CD4-positive, alpha-beta T cell (primary cell): ENCODE measurements at regions of chr3 and their contacts with region 1.

Region 1: DNA sequence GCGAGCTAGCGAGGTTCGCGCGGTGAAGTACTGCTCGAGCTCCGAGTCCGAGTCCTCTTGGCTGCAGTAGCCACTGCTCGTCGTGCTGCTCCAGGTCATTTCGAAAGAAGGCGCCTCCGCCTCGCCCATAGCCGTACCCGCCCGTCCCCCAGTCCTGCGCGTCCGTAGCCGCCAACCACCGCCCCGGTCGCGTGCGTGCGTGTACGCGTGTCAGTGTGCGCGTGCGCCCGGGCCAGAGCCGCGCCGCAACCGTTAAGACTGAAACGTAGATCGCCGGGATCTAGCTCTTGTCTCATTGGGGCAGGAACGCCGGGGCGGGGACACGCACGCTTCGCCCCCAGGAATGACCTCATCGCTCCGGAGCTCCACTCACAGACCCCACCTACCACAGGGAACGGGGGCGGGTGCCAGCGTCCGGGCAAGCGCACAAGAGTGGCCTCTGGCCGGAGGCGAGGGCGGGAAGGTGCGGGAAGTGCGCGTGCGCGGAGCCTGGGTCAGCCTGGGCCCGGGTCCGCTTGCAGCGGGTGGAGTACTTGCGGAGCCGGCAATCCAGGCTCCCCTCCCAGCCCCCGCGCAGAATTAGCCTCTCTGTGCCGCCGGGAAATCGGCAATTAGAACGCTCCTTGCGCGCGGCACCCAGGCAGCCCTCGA is 3.3 kb downstream of the RASSF1 start:
- DNase-seq: peak; percentile 81 to 98 (median 90)
- ATAC-seq: peak; percentile 77
- H3K4me3 ChIP-seq: peak overlapping the region; percentile 93
- H3K4me3 Mint-ChIP-seq: peak overlapping the region; percentile 96
- H3K27ac ChIP-seq: peak overlapping the region; percentile 95 to 96
- H3K27ac Mint-ChIP-seq: peak overlapping the region; percentile 95
- H3K4me1 ChIP-seq: peaks cover 85% of the 10 kb centered on the region
- H3K4me1 Mint-ChIP-seq: peaks cover 71% of the 10 kb centered on the region
- H3K27me3 ChIP-seq: no peaks in the 10 kb centered on the region
- H3K27me3 Mint-ChIP-seq: no peaks in the 10 kb centered on the region
- CTCF ChIP-seq: no peak

Region 2: DNA sequence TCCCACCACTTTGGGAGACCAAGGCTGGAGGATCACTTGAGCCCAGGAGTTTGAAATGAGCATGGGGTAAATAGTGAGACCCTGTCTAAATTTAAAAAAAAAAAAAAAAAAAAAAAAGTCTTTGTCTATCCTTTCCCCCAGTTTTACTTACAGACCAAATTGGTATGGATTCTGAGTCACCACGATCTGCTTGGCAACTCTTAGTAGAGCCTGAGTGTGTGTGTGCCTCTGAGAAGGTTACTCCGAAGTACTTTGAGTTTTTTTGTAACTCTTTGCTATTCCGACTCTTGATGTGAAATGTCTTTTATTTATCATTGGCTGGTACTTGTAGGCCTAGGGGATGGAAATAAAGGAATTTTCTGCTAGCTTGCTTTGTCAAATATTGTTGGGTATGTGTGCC is 334.1 kb before region 1 on chr3:
- CTCF ChIA-PET with region 1: no interaction called
- POLR2A ChIA-PET with region 1: no interaction called
- intact Hi-C with region 1: no loop called
- DNase-seq: no peak
- ATAC-seq: no peak
- H3K4me3 ChIP-seq: no peak overlapping the region
- H3K4me3 Mint-ChIP-seq: no peak overlapping the region
- H3K27ac ChIP-seq: no peak overlapping the region
- H3K27ac Mint-ChIP-seq: no peak overlapping the region
- H3K4me1 ChIP-seq: no peaks in the 10 kb centered on the region
- H3K4me1 Mint-ChIP-seq: peaks cover 11% of the 10 kb centered on the region
- H3K27me3 ChIP-seq: no peaks in the 10 kb centered on the region
- H3K27me3 Mint-ChIP-seq: no peaks in the 10 kb centered on the region
- CTCF ChIP-seq: no peak

Region 3: GRCh38 chr3:50235716-50236496 is 101.4 kb before region 1 on chr3 and contains the start of gene GNAI2:
- CTCF ChIA-PET with region 1: no interaction called
- POLR2A ChIA-PET with region 1: interaction called, 9 read pairs
- intact Hi-C with region 1: loop called in 1 of 2 experiments (anchors 5 kb)
- DNase-seq: peak; percentile 97 to 100 (median 99)
- ATAC-seq: peak; percentile 85
- H3K4me3 ChIP-seq: peak within 1 kb of the TSS; percentile 99
- H3K4me3 Mint-ChIP-seq: peak within 1 kb of the TSS; percentile 94
- H3K27ac ChIP-seq: peak within 1 kb of the TSS; percentile 73 to 80
- H3K27ac Mint-ChIP-seq: peak within 1 kb of the TSS; percentile 92
- H3K4me1 ChIP-seq: peaks cover 47% of the 10 kb centered on the region
- H3K4me1 Mint-ChIP-seq: peaks cover 45% of the 10 kb centered on the region
- H3K27me3 ChIP-seq: no peaks in the 10 kb centered on the region
- H3K27me3 Mint-ChIP-seq: no peaks in the 10 kb centered on the region
- CTCF ChIP-seq: no peak
- total RNA-seq, gene GNAI2: 204 to 217 TPM

Region 4: GRCh38 chr3:50260027-50260941 is 77.0 kb before region 1 on chr3:
- CTCF ChIA-PET with region 1: no interaction called
- POLR2A ChIA-PET with region 1: no interaction called
- intact Hi-C with region 1: no loop called
- DNase-seq: peak; percentile 58 to 92 (median 74)
- ATAC-seq: peak; percentile 91
- H3K4me3 ChIP-seq: peak overlapping the region; percentile 52
- H3K4me3 Mint-ChIP-seq: peak overlapping the region; percentile 74
- H3K27ac ChIP-seq: peak overlapping the region in 1 of 2 donors; percentile 29
- H3K27ac Mint-ChIP-seq: peak overlapping the region; percentile 51
- H3K4me1 ChIP-seq: peaks cover 15% of the 10 kb centered on the region
- H3K4me1 Mint-ChIP-seq: peaks cover 3% of the 10 kb centered on the region
- H3K27me3 ChIP-seq: no peaks in the 10 kb centered on the region
- H3K27me3 Mint-ChIP-seq: no peaks in the 10 kb centered on the region
- CTCF ChIP-seq: peak; percentile 87

Region 5: DNA sequence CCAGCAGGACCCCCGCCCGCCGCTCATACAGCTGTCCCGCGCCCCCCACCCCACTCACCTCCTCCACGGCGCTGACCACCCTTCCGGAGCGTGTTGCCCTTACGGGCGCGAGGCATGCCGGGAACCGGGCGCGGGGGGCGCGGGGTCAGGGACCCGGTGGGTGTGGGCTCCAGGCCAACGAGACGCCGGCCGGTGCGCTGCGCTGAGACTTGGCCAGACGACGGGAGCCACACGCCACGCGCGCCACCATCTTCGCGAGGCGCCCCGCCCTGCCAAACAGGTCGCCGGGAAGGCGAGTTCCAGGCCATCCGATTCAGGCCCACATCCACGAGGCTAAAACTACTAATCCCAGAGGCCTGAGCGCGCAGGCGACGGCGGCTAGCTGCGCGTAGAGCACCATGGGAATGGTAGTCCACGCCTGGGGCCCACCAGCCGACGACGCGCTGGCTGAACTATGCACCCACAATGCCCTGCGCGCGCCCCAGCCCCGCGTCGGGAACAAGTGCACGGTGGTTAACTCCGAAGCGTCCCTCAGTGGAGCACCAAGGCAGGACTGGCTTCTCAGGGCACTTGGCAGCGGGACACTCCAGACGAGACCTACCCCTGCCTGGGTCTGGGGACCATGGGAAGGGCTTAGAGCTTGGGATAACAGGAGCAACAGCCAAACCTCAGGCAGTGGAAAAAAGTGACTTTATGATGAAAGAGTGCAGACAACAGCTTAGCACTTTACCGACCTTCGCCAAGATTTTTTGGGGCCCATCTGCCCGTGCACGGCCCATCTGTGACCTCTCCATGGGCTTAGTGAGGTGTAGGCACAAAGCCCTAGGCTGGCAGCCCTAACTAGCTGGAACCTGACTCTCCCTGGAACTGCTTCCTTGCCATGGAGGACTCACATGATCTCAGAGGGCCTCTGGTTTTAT is 44.9 kb before region 1 on chr3 and contains the start of gene IFRD2:
- CTCF ChIA-PET with region 1: interaction called, 4 read pairs
- POLR2A ChIA-PET with region 1: interaction called, 28 read pairs
- intact Hi-C with region 1: loop called in 1 of 2 experiments (anchors 5 kb)
- DNase-seq: peak; percentile 90 to 98 (median 95)
- ATAC-seq: peak; percentile 98
- H3K4me3 ChIP-seq: peak within 1 kb of the TSS; percentile 95
- H3K4me3 Mint-ChIP-seq: peak within 1 kb of the TSS; percentile 95
- H3K27ac ChIP-seq: peak within 1 kb of the TSS; percentile 48 to 60
- H3K27ac Mint-ChIP-seq: peak within 1 kb of the TSS; percentile 93
- H3K4me1 ChIP-seq: peaks cover 25% of the 10 kb centered on the region
- H3K4me1 Mint-ChIP-seq: peaks cover 20% of the 10 kb centered on the region
- H3K27me3 ChIP-seq: no peaks in the 10 kb centered on the region
- H3K27me3 Mint-ChIP-seq: no peaks in the 10 kb centered on the region
- CTCF ChIP-seq: no peak
- total RNA-seq, gene IFRD2: 30.0 to 30.4 TPM

Region 6: DNA sequence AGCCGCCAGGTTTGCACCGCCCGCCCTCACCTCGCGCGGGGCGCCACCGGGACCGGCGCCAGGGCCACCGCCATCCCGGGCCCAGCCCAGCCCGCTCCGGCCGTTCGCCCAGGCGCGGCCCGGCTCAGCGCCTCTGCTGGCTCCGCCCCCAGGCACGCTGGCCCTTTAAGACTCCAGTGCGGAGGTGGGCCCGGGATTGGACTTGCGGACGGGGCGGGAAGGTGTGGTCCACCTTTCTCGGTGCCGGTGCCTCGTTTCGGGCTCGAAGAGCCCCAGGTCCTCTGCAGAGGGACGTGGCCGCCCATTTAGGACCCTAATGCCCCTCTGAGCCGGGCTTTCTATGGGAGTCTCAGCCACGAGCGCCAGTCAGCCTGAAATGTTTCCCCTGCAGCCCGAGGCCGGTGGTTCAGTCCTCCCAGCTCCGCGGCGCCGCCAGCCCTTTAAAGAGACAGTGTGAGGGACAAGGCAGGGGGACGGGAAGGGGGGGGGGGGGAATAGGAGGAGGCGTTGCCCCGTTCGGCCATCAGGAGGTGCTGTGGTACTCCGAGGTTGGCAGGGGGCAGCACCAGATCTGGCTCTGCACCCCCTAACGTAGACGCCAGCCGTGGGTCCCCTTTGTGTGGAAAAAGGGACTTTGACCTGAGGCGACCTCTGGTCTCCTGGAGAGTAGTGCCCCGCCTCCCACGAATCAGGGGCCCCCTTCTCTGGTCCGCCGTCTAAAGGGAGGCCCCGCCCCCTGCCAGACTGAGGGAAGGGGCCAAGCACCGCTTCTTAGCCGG is 15.8 kb before region 1 on chr3:
- CTCF ChIA-PET with region 1: interaction called, 19 read pairs
- POLR2A ChIA-PET with region 1: interaction called, 58 read pairs
- intact Hi-C with region 1: loop called in 1 of 2 experiments (anchors 2 kb)
- DNase-seq: peak; percentile 68 to 89 (median 76)
- ATAC-seq: peak; percentile 66
- H3K4me3 ChIP-seq: peak overlapping the region; percentile 68
- H3K4me3 Mint-ChIP-seq: peak overlapping the region; percentile 90
- H3K27ac ChIP-seq: peak overlapping the region; percentile 75 to 96
- H3K27ac Mint-ChIP-seq: peak overlapping the region; percentile 82
- H3K4me1 ChIP-seq: peaks cover 76% of the 10 kb centered on the region
- H3K4me1 Mint-ChIP-seq: peaks cover 42% of the 10 kb centered on the region
- H3K27me3 ChIP-seq: no peaks in the 10 kb centered on the region
- H3K27me3 Mint-ChIP-seq: no peaks in the 10 kb centered on the region
- CTCF ChIP-seq: peak; percentile 45

Region 7: GRCh38 chr3:51511000-51511399 is 1173.7 kb after region 1 on chr3:
- CTCF ChIA-PET with region 1: no interaction called
- POLR2A ChIA-PET with region 1: no interaction called
- intact Hi-C with region 1: no loop called
- DNase-seq: no peak
- ATAC-seq: no peak
- H3K4me3 ChIP-seq: no peak overlapping the region
- H3K4me3 Mint-ChIP-seq: no peak overlapping the region
- H3K27ac ChIP-seq: no peak overlapping the region
- H3K27ac Mint-ChIP-seq: no peak overlapping the region
- H3K4me1 ChIP-seq: peaks cover 4% of the 10 kb centered on the region
- H3K4me1 Mint-ChIP-seq: peaks cover 6% of the 10 kb centered on the region
- H3K27me3 ChIP-seq: no peaks in the 10 kb centered on the region
- H3K27me3 Mint-ChIP-seq: no peaks in the 10 kb centered on the region
- CTCF ChIP-seq: no peak